KBM-7 (cell line): ENCODE measurements at regions of chr1 and their contacts with region 1.

Region 1: DNA sequence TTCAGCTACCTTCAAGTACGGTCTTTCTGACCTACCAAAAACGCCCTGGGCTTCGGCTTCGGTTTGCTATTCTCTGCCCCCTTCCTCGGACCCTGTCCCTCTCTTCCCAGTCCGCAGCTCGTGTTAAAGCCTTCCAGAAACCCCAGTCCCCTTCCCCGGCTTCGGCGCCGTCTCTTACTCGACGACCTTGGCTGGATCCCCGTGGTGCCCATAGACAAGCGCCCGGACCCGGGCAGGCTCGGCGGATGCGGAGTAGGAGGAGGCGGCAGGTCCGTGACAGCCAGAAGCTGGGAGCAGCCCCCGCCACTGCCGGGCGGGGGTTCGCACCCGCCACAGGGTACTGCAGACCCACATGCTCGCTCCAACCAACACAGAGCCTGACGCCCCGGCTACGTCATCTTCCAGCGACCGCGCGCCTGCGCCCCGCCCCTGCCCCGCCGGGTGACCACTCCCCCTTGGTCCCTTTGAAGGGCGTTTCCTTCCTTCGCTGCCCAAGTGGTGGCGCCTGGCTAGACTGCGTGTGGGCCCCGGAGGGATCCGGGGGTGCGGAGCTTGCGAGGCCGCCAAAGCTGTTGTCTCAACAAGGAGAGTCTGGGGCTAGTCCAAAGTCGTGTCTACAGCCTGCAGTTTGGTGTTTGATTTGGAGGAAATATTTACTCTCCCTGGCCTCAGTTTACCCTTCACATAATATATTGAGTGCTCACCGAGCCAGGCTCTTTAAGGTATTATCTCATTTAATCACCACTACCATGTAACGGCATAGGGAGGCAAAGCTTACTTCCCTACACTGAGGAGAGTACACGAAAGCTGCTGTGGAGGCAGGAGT is at the start of gene MECR:
- DNase-seq: peak; percentile 95

Region 2: DNA sequence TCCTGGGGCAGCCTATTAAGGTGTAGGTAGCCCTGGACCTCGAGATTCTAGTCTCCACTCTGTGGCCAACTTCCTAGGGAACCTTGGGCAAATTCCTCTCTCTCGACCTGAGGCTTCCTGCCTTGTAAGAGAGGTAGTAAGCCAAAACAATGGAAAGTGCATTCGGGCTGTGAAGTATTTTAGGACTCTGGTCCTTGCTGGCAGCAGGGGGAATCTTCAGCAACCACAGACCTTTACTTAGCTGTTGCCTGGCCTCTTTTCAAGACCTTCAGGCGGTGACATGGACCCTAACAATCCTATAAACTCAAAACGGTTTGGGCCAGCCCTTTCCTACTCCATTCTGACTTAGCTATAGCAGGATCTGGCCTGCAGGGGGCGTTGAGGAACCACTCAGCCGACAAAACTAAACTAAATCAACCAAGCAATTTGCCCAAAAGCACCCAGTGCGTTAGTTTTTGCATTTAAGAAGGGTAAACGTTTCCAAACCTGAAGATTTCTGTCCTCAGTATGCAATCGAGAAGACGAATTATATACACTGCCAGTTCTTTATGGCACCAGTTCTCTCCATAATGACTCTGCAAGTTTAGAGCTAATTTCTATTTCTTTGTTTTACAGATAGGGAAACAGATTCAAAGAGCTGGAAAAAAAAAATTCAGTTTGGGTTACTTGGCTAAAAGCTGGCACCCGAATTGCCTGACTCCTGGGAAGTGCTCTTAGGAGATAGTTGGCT is 982.3 kb before region 1 on chr1:
- in situ Hi-C with region 1: no loop called
- DNase-seq: peak; percentile 94

Region 3: GRCh38 chr1:29542548-29542947 is 311.8 kb after region 1 on chr1:
- in situ Hi-C with region 1: no loop called
- DNase-seq: no peak

Region 4: DNA sequence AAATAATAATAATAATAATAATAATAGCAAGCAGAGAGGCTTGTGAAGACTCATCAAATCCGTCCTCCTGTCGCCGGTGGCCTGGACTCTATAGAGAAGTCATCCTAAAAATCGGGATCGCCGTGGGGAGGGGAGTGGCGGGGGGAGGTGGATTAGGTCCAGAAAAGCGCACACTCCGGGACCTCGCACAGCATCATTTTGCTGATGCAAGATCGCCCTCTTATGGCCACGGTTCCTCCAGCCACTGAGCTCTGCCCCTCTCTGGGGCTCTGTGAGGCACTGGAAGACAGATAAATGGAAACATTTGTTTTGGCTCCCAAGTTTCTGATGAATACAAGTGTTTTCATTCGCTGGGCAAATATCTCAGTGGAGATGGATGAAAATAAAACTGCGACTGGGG is 880.7 kb after region 1 on chr1:
- in situ Hi-C with region 1: loop called (anchors 25 kb)
- DNase-seq: peak; percentile 43